H1 (cell line): ENCODE measurements at regions of chr13 and their contacts with region 1.

Region 1: DNA sequence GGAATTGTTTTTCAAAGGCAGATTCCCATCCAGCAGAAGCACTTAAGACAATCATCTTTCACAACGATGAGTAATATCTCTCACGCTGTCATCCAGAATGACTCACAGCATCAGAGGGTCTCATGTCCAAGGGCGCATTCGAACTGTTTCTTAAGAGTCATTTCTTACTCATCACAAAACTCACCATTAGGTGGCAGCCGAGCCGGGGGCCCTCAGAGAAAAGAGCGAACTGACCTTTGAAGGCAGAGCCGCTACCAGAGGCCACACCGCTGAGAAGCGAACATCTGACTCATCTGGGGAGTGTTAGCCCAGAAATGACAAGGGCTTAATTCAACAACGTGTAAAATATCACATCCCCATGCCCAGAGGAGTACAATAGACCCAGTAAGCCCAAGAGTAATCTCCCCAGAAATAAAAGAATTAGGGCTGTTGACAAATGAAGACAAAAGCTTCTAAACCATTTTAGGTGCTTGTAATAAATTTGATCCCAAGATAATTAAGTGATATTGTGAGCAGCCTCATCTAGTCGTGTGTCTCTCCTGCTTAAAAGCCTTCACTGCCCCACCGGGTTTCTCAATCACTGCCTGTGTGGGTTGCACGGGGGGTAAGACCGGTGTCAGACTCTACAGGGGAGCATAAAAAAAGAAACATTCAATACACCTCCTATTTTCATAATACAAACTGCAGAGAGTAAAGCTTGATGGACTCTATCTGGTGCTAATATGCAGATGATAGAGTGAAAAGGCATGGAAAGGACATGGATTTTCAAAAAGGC is 96.2 kb downstream of the CYSLTR2 start:
- DNase-seq: peak; percentile 46 to 76
- H3K4me3 ChIP-seq: no peak overlapping the region
- H3K27ac ChIP-seq: no peak overlapping the region
- H3K4me1 ChIP-seq: no peaks in the 10 kb centered on the region
- H3K27me3 ChIP-seq: no peaks in the 10 kb centered on the region
- CTCF ChIP-seq: peak; percentile 37 to 62 (median 61)
- EP300 ChIP-seq: no peak
- POLR2A ChIP-seq: no peak
- RAD21 ChIP-seq: peak; percentile 52 to 66; a peak in 3 of 4 replicates

Region 2: DNA sequence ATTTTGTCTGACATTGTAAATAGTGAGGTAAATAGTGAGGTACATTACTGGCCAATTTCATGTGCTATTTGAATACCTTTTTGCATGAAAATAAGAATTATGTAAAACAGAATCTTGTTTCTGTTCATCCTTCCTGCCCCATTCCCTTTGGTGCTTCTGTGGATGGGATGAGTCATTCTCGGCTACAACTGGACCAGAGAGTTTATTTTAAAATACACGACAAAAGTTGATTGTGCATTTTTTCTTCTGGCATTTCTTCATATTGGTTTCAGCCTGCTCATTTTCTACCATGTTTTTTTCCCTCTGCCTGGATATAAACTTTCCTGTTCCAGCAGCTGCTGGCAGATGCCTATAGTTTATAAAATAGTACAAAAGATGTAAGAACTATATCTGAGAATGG is 11.4 kb after region 1 on chr13:
- CTCF ChIA-PET with region 1: interaction called, 19 read pairs
- POLR2A ChIA-PET with region 1: no interaction called
- DNase-seq: no peak
- H3K4me3 ChIP-seq: no peak overlapping the region
- H3K27ac ChIP-seq: no peak overlapping the region
- H3K4me1 ChIP-seq: peaks cover 0 to 3% (median 0%) of the 10 kb centered on the region in 4 experiments; a peak in 2 of 7 replicates
- H3K27me3 ChIP-seq: no peaks in the 10 kb centered on the region
- CTCF ChIP-seq: no peak
- EP300 ChIP-seq: no peak
- POLR2A ChIP-seq: no peak
- RAD21 ChIP-seq: no peak

Region 3: DNA sequence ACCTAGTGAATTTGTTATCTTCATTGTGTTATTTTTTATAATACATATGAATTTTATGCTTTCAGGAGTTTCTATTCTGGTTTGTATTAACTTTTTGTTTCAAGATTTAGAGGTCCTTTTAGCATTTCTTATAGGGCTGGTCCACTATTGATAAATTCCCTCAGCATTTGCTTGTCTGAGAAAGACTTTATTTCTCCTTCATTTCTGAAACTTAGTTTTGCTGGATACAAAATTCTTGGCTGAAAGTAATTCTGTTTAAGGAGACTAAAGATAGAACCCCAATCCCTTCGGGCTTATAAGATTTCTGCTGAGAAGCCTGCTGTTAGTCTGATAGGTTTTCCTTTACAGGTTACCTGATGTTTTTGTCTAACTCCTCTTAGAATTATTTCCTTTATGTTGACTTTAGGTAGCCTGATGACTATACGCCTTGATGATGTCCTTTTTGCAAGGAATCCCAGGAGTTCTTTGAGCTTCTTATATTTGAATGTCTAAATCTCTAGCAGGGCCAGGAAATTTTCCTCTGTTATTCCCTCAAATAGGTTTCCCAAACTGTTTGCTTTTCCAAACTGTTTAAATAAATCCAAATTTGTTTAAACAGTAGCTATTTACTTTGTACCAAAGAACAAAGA is 30.9 kb after region 1 on chr13:
- CTCF ChIA-PET with region 1: no interaction called
- POLR2A ChIA-PET with region 1: no interaction called
- DNase-seq: no peak
- H3K4me3 ChIP-seq: no peak overlapping the region
- H3K27ac ChIP-seq: no peak overlapping the region
- H3K4me1 ChIP-seq: no peaks in the 10 kb centered on the region
- H3K27me3 ChIP-seq: no peaks in the 10 kb centered on the region
- CTCF ChIP-seq: no peak
- EP300 ChIP-seq: no peak
- POLR2A ChIP-seq: no peak
- RAD21 ChIP-seq: no peak